Ascending aorta (tissue), 2 donors: ENCODE measurements at regions of chr7 and their contacts with region 1.

Region 1: GRCh38 chr7:127585044-127585953 is at the start of gene GCC1:
- DNase-seq: peak; percentile 67 to 96
- H3K4me3 ChIP-seq: peak within 1 kb of the TSS; percentile 75 to 79
- H3K27ac ChIP-seq: peak within 1 kb of the TSS; percentile 89 to 94
- H3K4me1 ChIP-seq: peaks cover 6 to 44% of the 10 kb centered on the region in 2 donors
- H3K27me3 ChIP-seq: no peaks in the 10 kb centered on the region
- CTCF ChIP-seq: no peak
- total RNA-seq, gene GCC1: 11.2 TPM

Region 2: GRCh38 chr7:127253281-127254162 is 331.8 kb before region 1 on chr7:
- intact Hi-C with region 1: loop called (anchors 5 kb)
- DNase-seq: peak in 1 of 2 donors; percentile 74
- H3K4me3 ChIP-seq: peak overlapping the region; percentile 53 to 96
- H3K27ac ChIP-seq: peak overlapping the region; percentile 8 to 45
- H3K4me1 ChIP-seq: peaks cover 15 to 18% of the 10 kb centered on the region in 2 donors
- H3K27me3 ChIP-seq: no peaks in the 10 kb centered on the region
- CTCF ChIP-seq: peak; percentile 54 to 95 (median 94)

Region 3: DNA sequence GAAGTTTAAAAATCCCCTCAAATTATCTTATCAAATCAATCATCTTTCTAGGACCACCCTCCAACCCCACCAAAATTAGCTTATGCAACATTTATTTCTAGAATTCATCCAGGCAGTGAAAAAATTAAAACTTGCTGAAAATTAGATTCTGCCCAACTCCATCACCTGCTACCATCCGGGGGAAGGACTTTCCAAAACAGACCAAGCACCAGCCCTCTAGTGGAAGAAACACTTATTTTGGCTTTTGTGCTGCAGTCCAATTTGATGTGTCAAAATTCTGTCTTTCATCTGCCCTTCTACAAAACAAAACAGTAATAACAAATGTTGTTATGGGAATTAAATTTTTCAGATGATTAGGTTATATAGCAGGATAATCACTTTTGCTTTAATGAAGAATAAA is 35.1 kb before region 1 on chr7:
- intact Hi-C with region 1: no loop called
- DNase-seq: no peak
- H3K4me3 ChIP-seq: no peak overlapping the region
- H3K27ac ChIP-seq: no peak overlapping the region
- H3K4me1 ChIP-seq: no peaks in the 10 kb centered on the region
- H3K27me3 ChIP-seq: no peaks in the 10 kb centered on the region
- CTCF ChIP-seq: no peak

Region 4: GRCh38 chr7:127632280-127632791 is 47.0 kb after region 1 on chr7:
- intact Hi-C with region 1: loop called (anchors 5 kb)
- DNase-seq: no peak
- H3K4me3 ChIP-seq: no peak overlapping the region
- H3K27ac ChIP-seq: peak overlapping the region in 1 of 2 donors; percentile 34
- H3K4me1 ChIP-seq: peaks cover 0 to 10% of the 10 kb centered on the region in 2 donors
- H3K27me3 ChIP-seq: no peaks in the 10 kb centered on the region
- CTCF ChIP-seq: no peak

Region 5: GRCh38 chr7:127708788-127709187 is 123.5 kb after region 1 on chr7:
- intact Hi-C with region 1: loop called (anchors 2 kb)
- DNase-seq: peak in 1 of 2 donors; percentile 84
- H3K4me3 ChIP-seq: no peak overlapping the region
- H3K27ac ChIP-seq: no peak overlapping the region
- H3K4me1 ChIP-seq: peaks cover 0 to 2% of the 10 kb centered on the region in 2 donors
- H3K27me3 ChIP-seq: no peaks in the 10 kb centered on the region
- CTCF ChIP-seq: peak; percentile 55 to 76 (median 68)

Region 6: GRCh38 chr7:128409596-128410160 is 824.4 kb after region 1 on chr7 and contains the start of gene IMPDH1:
- intact Hi-C with region 1: loop called (anchors 5 kb)
- DNase-seq: peak; percentile 60 to 94
- H3K4me3 ChIP-seq: peak within 1 kb of the TSS; percentile 62 to 94
- H3K27ac ChIP-seq: peak within 1 kb of the TSS; percentile 87 to 92
- H3K4me1 ChIP-seq: peaks cover 6 to 22% of the 10 kb centered on the region in 2 donors
- H3K27me3 ChIP-seq: no peaks in the 10 kb centered on the region
- CTCF ChIP-seq: no peak
- total RNA-seq, gene IMPDH1: 148 TPM